ENCODE measurements at regions of chr9 and their contacts with region 1.

Region 1: GRCh38 chr9:121369595-121370265 is at the start of gene STOM:
- DNase-seq: peak; percentile 93
- ATAC-seq: peak; percentile 76 to 87
- total RNA-seq, gene STOM: 194 to 326 TPM

Region 2: GRCh38 chr9:121201738-121202533 is 167.8 kb before region 1 on chr9 and contains the start of gene RAB14:
- intact Hi-C with region 1: loop called in 1 of 2 experiments (anchors 10 kb)
- DNase-seq: peak; percentile 100
- ATAC-seq: peak; percentile 97 to 98
- total RNA-seq, gene RAB14: 44.1 to 49.3 TPM

Region 3: DNA sequence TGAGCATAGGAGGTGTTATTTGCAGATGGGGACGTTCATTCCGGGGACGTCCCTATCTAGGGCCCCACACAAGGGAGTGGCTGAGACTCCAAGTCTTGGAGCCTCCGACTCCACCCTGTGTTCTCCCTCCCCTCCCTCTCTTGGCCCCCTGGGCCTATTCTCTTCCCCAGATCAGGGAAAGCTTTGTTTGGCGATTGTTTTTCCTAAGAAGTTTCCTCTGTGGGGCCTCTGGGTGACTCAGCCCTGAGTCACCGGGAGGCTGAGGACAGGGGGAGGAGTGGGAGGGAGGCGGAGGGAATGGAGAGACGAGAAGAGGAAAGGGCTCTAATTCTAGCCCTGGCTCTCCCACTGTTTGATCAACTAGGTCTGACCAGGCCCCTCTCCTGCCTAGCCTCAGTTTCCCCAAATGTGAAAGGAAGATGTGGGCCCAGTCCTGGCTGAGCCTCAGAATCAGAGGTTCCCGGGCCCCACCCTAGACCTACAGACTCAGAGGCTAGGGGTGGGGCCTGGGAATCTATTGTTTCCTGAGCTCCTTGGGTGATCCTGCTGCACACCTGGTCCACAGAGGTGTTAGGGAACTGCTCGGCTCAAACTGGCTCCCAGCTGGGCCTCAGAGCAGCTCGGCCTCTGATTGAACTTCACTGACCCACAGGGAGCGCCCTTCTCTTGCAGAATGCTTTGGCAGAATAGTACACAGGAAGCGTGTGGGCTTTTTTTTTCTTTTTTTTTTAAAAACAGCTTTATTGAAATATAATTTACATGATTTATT is 82.6 kb before region 1 on chr9:
- intact Hi-C with region 1: loop called in 1 of 2 experiments (anchors 2 kb)
- DNase-seq: peak; percentile 88
- ATAC-seq: peak; percentile 74 to 75

Region 4: GRCh38 chr9:121463026-121463807 is 93.5 kb after region 1 on chr9:
- intact Hi-C with region 1: no loop called
- DNase-seq: peak; percentile 75
- ATAC-seq: peak; percentile 77 to 83